ENCODE measurements at regions of chr2 and their contacts with region 1.

Region 1: GRCh38 chr2:229586746-229587705 is 127.3 kb downstream of the DNER start:
- DNase-seq: peak; percentile 67
- H3K4me3 ChIP-seq: no peak overlapping the region
- H3K27ac ChIP-seq: peak overlapping the region in 1 of 2 donors; percentile 43
- H3K4me1 ChIP-seq: no peaks in the 10 kb centered on the region
- H3K27me3 ChIP-seq: no peaks in the 10 kb centered on the region
- CTCF ChIP-seq: peak; percentile 69 to 84 (median 81)
- POLR2A ChIP-seq: no peak

Region 2: GRCh38 chr2:228681426-228681825 is 905.6 kb before region 1 on chr2:
- intact Hi-C with region 1: loop called (anchors 10 kb)
- DNase-seq: no peak
- H3K4me3 ChIP-seq: no peak overlapping the region
- H3K27ac ChIP-seq: no peak overlapping the region
- H3K4me1 ChIP-seq: no peaks in the 10 kb centered on the region
- H3K27me3 ChIP-seq: no peaks in the 10 kb centered on the region
- CTCF ChIP-seq: peak in 3 of 4 experiments; percentile 26 to 41 (median 27)
- POLR2A ChIP-seq: no peak

Region 3: DNA sequence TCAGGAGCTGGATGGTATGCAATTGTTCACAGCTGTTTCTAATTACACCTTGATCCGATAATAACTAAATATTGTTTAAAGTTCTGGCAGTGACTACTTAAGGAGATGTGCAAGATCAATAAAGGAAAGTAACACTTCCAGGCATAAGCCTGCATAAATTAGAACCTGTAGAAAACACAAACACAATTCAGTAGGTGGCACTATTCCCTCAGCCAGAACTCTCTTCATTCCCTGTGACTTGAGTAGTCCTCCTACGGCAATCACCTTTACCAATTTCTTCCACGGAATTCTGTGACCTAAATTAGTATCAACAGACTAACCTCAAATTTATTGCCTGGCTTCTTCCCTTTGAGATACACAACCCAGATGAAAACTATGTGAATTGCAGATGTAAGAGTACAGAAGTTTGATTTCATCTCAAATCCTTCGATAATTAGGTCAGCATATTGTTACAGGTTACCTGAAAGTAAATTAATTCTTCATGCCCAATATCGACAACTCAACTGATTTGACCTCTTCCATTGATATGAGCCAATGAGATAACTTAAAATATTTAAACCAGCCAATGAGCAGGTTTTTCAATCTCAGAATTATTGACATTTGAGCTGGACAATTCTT is 453.8 kb before region 1 on chr2:
- intact Hi-C with region 1: loop called (anchors 10 kb)
- DNase-seq: peak; percentile 30
- H3K4me3 ChIP-seq: no peak overlapping the region
- H3K27ac ChIP-seq: no peak overlapping the region
- H3K4me1 ChIP-seq: no peaks in the 10 kb centered on the region
- H3K27me3 ChIP-seq: no peaks in the 10 kb centered on the region
- CTCF ChIP-seq: peak; percentile 17 to 63 (median 39)
- POLR2A ChIP-seq: no peak

Region 4: DNA sequence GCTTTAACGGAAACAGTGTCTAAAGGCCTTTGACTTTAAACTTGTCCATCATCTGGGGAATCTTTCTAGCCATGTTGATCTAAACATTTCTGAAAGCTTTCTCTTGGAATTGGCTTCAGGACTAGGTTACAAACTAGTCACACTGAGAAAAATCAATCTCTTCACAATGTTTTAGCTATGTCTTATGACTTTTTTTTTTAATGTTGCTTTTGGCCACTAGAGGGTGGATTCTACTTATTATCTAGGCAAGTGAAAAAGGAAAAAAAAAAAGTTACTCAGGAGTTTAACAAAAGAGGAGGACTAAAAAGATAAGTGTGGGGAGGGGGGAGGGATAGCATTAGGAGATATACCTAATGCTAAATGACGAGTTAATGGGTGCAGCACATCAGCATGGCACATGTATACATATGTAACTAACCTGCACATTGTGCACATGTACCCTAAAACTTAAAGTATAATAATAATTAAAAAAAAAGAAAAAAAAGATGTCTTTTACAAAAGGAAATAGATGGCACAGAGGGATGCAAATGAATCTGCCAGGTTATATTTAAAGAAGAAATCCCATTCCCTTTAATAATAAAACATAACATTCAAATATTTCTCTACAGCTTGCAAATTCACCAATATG is 155.6 kb before region 1 on chr2:
- intact Hi-C with region 1: loop called (anchors 5 kb)
- DNase-seq: no peak
- H3K4me3 ChIP-seq: no peak overlapping the region
- H3K27ac ChIP-seq: no peak overlapping the region
- H3K4me1 ChIP-seq: no peaks in the 10 kb centered on the region
- H3K27me3 ChIP-seq: no peaks in the 10 kb centered on the region
- CTCF ChIP-seq: peak in 3 of 4 experiments; percentile 47 to 51 (median 51)
- POLR2A ChIP-seq: no peak

Region 5: GRCh38 chr2:229642371-229642770 is 55.3 kb after region 1 on chr2:
- intact Hi-C with region 1: no loop called
- DNase-seq: no peak
- H3K4me3 ChIP-seq: no peak overlapping the region
- H3K27ac ChIP-seq: no peak overlapping the region
- H3K4me1 ChIP-seq: no peaks in the 10 kb centered on the region
- H3K27me3 ChIP-seq: no peaks in the 10 kb centered on the region
- CTCF ChIP-seq: no peak
- POLR2A ChIP-seq: no peak

Region 6: DNA sequence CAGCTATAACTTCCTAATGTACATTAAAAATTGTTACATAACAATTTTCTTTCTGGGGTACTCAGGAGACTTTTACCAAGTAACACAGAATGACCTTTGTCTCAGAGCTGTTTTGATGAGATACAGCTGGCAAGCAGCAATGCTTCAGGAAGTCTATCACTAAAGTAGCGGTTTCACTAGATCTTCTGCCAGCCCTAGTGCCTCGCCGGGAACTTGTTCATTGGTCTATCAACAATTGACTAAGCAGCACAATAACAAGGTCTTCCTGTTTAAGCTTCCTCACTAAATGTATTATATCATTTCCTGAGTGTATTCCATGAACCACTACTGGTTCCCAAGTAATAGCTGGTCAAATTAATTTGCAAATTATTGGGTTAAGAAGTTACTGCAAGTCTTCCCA is 265.5 kb after region 1 on chr2:
- intact Hi-C with region 1: no loop called
- DNase-seq: no peak
- H3K4me3 ChIP-seq: no peak overlapping the region
- H3K27ac ChIP-seq: no peak overlapping the region
- H3K4me1 ChIP-seq: no peaks in the 10 kb centered on the region
- H3K27me3 ChIP-seq: no peaks in the 10 kb centered on the region
- CTCF ChIP-seq: no peak
- POLR2A ChIP-seq: no peak

Region 7: GRCh38 chr2:229980431-229981184 is 393.6 kb after region 1 on chr2:
- intact Hi-C with region 1: no loop called
- DNase-seq: peak; percentile 90
- H3K4me3 ChIP-seq: peak overlapping the region in 1 of 2 donors; percentile 3
- H3K27ac ChIP-seq: peak overlapping the region; percentile 70 to 84
- H3K4me1 ChIP-seq: peaks cover 3% of the 10 kb centered on the region
- H3K27me3 ChIP-seq: no peaks in the 10 kb centered on the region
- CTCF ChIP-seq: no peak
- POLR2A ChIP-seq: no peak

Measured in prostate gland (tissue), 2 donors.